MCF 10A (cell line): ENCODE measurements at regions of chr9 and their contacts with region 1.

Region 1: DNA sequence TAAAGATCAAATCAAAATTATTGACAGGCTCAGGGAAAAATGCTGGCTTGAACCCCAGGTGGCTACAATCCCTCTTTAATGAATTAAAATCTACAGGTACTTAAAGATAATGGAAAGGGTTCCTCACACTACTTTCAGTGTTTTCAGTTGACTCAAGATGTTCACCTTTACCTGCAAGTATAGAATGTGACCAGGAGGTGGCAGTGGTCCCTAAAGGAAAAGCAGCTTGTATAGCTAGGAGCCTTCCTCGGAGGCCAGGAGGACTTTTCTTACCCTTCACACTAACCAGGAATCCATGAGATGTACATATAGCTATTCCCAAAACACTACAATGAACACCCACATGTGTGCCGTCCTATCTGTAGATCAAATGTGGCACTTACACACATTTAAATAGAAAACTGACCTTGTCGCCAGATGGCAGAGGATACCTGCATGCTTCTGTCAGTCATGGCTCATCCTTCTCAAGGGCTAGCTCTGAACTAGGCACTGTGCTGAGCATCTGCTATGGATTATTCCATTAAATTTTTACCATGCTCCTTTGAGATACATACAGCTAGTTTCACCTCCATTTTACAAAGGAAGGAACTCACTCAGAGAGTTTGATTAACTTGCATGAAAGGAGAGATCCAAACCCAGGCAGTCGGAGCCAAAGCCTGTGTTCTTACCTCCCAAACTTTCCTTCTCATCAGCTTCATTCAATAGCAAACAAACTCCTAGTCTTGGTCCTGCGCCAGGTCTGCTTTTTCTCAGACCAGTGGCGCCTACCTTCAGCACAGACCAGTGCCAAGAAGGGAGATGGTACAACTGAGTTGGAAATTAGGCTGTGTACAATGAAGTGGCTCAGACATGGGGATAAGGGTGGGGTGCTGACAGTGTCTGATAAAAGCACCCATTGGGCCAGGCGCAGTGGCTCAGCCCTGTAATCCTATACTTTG is 24.5 kb downstream of the C9orf152 start:
- DNase-seq: peak; percentile 86
- H3K4me3 Mint-ChIP-seq: no peak overlapping the region
- H3K27ac Mint-ChIP-seq: no peak overlapping the region
- H3K4me1 Mint-ChIP-seq: peaks cover 18% of the 10 kb centered on the region
- H3K27me3 Mint-ChIP-seq: no peaks in the 10 kb centered on the region
- CTCF ChIP-seq: peak; percentile 82

Region 2: GRCh38 chr9:110160123-110160522 is 23.4 kb before region 1 on chr9:
- CTCF ChIA-PET with region 1: no interaction called
- POLR2A ChIA-PET with region 1: no interaction called
- intact Hi-C with region 1: no loop called
- DNase-seq: no peak
- H3K4me3 Mint-ChIP-seq: no peak overlapping the region
- H3K27ac Mint-ChIP-seq: no peak overlapping the region
- H3K4me1 Mint-ChIP-seq: no peaks in the 10 kb centered on the region
- H3K27me3 Mint-ChIP-seq: no peaks in the 10 kb centered on the region
- CTCF ChIP-seq: no peak

Region 3: GRCh38 chr9:110170357-110171257 is 12.9 kb before region 1 on chr9:
- CTCF ChIA-PET with region 1: interaction called, 14 read pairs
- POLR2A ChIA-PET with region 1: no interaction called
- intact Hi-C with region 1: no loop called
- DNase-seq: no peak
- H3K4me3 Mint-ChIP-seq: no peak overlapping the region
- H3K27ac Mint-ChIP-seq: no peak overlapping the region
- H3K4me1 Mint-ChIP-seq: peaks cover 8% of the 10 kb centered on the region
- H3K27me3 Mint-ChIP-seq: no peaks in the 10 kb centered on the region
- CTCF ChIP-seq: no peak

Region 4: DNA sequence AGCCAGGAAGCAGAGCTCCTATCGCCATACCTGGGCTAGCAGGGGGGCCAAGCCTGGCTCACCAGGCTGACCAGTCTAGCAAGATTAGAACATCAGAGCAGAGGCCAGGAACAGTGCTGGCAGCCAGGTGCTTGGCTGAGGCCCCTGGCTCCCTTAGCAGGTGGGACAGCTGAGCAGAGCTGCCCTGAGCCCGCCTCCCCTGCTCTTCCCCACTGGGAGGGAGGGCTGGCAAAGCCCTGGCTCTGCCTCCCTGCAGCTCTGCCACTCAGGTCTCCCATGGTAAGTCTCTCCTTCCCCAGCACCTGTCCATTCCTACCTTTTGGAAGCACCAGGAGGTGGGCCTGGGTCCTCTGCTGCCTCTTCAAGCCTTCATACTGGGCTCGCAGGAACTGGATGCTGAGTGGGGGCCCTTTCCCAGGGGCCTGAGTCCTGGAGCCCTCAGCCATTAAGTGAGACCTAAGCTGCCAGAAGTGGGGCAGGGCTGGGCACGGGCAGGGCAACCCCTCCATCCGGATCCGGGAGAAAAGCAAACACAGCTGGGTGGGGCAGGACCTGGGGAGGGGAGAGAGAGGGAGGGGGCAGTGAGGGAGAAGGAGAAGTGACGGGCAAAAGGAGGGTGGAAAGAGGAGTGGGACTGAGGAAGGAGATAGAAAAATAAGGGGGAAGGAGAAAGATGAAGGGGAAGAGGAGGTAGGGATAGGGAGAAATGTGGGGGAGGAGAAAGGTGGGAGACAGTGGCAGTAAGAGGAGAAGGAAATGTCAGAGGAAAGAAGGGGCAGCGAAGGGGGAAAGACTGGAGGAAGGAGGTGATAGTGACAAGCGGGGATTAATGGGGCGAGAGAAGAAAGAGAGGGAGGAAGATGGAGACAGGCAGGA is 23.8 kb after region 1 on chr9:
- CTCF ChIA-PET with region 1: interaction called, 276 read pairs
- POLR2A ChIA-PET with region 1: interaction called, 4 read pairs
- intact Hi-C with region 1: no loop called
- DNase-seq: no peak
- H3K4me3 Mint-ChIP-seq: no peak overlapping the region
- H3K27ac Mint-ChIP-seq: no peak overlapping the region
- H3K4me1 Mint-ChIP-seq: no peaks in the 10 kb centered on the region
- H3K27me3 Mint-ChIP-seq: no peaks in the 10 kb centered on the region
- CTCF ChIP-seq: no peak

Region 5: GRCh38 chr9:110217656-110218099 is 34.2 kb after region 1 on chr9:
- CTCF ChIA-PET with region 1: interaction called, 276 read pairs
- POLR2A ChIA-PET with region 1: interaction called, 14 read pairs
- intact Hi-C with region 1: loop called (anchors 1 kb)
- DNase-seq: peak; percentile 50
- H3K4me3 Mint-ChIP-seq: no peak overlapping the region
- H3K27ac Mint-ChIP-seq: no peak overlapping the region
- H3K4me1 Mint-ChIP-seq: peaks cover 11% of the 10 kb centered on the region
- H3K27me3 Mint-ChIP-seq: no peaks in the 10 kb centered on the region
- CTCF ChIP-seq: peak; percentile 47

Region 6: GRCh38 chr9:110427497-110428104 is 244.1 kb after region 1 on chr9:
- CTCF ChIA-PET with region 1: interaction called, 18 read pairs
- POLR2A ChIA-PET with region 1: interaction called, 3 read pairs
- intact Hi-C with region 1: loop called (anchors 2 kb)
- DNase-seq: peak; percentile 49
- H3K4me3 Mint-ChIP-seq: no peak overlapping the region
- H3K27ac Mint-ChIP-seq: no peak overlapping the region
- H3K4me1 Mint-ChIP-seq: peaks cover 6% of the 10 kb centered on the region
- H3K27me3 Mint-ChIP-seq: no peaks in the 10 kb centered on the region
- CTCF ChIP-seq: peak; percentile 48

Region 7: DNA sequence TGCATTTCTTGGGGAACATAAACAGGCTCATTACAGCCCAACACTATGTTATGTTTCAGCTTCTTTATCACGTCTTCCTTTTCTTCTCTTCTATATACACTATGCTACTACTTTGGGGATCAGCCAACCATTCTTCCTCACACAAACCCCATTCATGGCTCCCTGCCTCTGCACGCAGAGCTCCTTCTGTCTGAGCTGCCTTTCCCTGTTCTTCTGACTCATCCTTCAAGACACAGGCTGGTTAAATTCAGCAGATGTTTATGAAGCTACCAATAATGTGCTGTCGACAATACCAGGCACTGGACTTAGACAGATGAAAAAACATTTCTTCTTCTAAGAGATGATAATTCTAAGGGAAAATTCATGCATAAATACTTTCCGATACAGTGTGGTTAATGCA is 256.7 kb after region 1 on chr9:
- CTCF ChIA-PET with region 1: interaction called, 15 read pairs
- POLR2A ChIA-PET with region 1: no interaction called
- intact Hi-C with region 1: no loop called
- DNase-seq: peak; percentile 67
- H3K4me3 Mint-ChIP-seq: peak overlapping the region; percentile 1
- H3K27ac Mint-ChIP-seq: peak overlapping the region; percentile 55
- H3K4me1 Mint-ChIP-seq: peaks cover 32% of the 10 kb centered on the region
- H3K27me3 Mint-ChIP-seq: no peaks in the 10 kb centered on the region
- CTCF ChIP-seq: no peak

Region 8: DNA sequence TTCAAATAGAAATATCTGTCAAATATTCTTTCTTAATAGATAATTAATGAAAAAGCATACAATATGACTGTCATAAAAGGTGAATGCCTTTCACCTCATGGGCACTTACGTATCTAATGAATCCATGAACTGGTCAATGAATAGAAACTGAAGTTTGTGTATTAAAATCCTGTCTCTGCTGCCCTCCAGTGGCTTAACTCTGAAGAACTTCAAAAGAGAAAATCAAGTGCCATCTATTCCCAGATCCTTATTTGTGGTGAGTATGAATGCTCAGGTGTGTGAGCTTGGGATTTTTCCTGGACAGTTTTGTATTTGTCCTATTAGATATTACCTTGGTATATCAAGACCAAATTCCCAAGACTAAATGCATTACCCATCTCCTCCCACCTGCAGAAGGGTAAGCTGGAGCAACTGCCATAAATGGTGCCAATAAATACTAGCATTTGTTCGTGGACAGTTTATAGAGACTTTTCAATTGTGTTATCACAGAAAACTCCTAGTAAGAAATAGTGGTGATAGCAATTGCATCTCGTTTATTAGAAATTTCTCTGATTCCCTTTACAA is 440.1 kb after region 1 on chr9:
- CTCF ChIA-PET with region 1: interaction called, 20 read pairs
- POLR2A ChIA-PET with region 1: interaction called, 4 read pairs
- intact Hi-C with region 1: loop called (anchors 1 kb)
- DNase-seq: peak; percentile 77
- H3K4me3 Mint-ChIP-seq: no peak overlapping the region
- H3K27ac Mint-ChIP-seq: no peak overlapping the region
- H3K4me1 Mint-ChIP-seq: no peaks in the 10 kb centered on the region
- H3K27me3 Mint-ChIP-seq: no peaks in the 10 kb centered on the region
- CTCF ChIP-seq: peak; percentile 60

Region 9: GRCh38 chr9:110744753-110745384 is 561.4 kb after region 1 on chr9:
- CTCF ChIA-PET with region 1: no interaction called
- POLR2A ChIA-PET with region 1: no interaction called
- intact Hi-C with region 1: no loop called
- DNase-seq: peak; percentile 98
- H3K4me3 Mint-ChIP-seq: no peak overlapping the region
- H3K27ac Mint-ChIP-seq: peak overlapping the region; percentile 88
- H3K4me1 Mint-ChIP-seq: peaks cover 62% of the 10 kb centered on the region
- H3K27me3 Mint-ChIP-seq: no peaks in the 10 kb centered on the region
- CTCF ChIP-seq: no peak